CD8-positive, alpha-beta T cell (primary cell): ENCODE measurements at regions of chr7 and their contacts with region 1.

Region 1: DNA sequence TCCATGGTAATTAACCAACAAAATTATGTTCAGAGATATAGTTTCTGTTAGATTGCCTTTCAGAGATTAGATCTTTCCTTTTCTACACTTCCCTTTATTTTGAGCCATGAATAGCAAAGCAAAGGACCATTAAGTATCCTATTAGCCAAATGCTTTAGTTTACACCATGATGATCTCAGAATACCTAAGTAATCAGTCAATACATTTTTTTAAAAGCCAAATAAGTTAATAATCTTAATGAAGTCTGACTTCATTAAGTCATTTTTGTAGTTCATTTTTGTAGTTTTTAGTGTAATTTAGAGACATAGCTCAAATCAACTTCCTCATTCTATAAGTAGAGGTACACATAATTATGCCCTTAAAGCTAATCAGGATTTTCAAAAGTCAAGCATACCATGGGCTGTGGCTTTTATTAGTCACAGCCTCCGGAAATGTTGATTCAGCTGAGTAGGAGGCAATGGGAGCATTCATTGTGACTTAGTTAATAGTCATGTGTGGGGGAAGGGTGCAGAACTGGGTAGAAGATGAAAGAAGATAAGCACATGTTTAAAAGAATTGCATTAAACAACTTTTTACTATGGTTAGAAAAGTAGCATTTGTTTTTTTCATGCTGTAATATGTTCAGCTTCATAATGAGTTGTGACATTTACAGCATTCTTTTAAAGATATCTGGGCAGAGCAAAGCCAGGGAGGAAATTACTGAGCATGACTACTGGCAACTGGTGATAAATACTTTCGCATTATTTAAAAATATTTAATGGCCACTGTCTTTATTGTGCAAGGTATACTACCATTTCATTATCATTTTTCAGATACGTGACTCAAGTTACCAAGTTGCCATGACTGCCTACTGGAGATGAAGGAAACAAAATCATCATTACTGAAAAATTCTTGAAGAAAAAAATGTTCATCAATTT is 57.3 kb upstream of the CCDC71L start:
- DNase-seq: peak in 7 of 9 experiments; percentile 18 to 66 (median 51)
- ATAC-seq: peak; percentile 95
- H3K4me3 ChIP-seq: no peak overlapping the region
- H3K4me3 Mint-ChIP-seq: no peak overlapping the region
- H3K27ac ChIP-seq: no peak overlapping the region
- H3K27ac Mint-ChIP-seq: no peak overlapping the region
- H3K4me1 ChIP-seq: peaks cover 5% of the 10 kb centered on the region
- H3K4me1 Mint-ChIP-seq: no peaks in the 10 kb centered on the region
- H3K27me3 ChIP-seq: no peaks in the 10 kb centered on the region
- H3K27me3 Mint-ChIP-seq: no peaks in the 10 kb centered on the region
- CTCF ChIP-seq: no peak

Region 2: DNA sequence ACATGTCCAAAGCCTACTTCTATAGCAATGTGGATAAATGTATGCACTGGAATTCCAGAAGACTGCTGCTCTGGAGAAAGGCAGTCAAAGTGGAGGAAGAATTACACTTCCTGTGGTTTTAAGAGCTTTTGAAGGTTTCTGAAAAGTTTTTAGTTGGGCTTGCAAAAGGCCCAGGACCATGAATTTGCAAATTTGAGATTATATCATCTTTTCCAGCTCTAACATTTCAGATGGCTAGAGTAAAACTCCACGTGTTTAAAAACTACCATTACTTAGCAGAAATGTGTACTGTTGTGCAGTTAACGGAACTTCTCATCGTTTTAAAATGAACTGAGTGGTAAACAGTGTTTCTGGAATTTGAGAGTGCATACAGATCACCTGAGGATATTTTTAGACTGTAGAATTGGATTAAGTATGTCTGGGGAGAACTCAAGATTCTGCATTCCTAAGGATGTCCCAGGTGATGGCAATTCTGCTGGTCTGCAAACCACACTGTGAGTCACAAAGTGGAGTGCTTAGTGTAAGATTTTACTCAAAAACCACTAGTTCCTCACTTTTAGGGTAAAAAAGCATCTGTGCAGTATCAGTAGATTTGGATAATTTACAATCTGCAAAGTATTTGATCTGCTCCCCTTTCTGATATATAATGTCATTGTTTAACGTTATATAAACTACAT is 24.4 kb before region 1 on chr7:
- CTCF ChIA-PET with region 1: no interaction called
- POLR2A ChIA-PET with region 1: no interaction called
- intact Hi-C with region 1: loop called in 1 of 2 experiments (anchors 1 kb)
- DNase-seq: no peak
- ATAC-seq: no peak
- H3K4me3 ChIP-seq: no peak overlapping the region
- H3K4me3 Mint-ChIP-seq: no peak overlapping the region
- H3K27ac ChIP-seq: no peak overlapping the region
- H3K27ac Mint-ChIP-seq: no peak overlapping the region
- H3K4me1 ChIP-seq: no peaks in the 10 kb centered on the region
- H3K4me1 Mint-ChIP-seq: peaks cover 7% of the 10 kb centered on the region
- H3K27me3 ChIP-seq: no peaks in the 10 kb centered on the region
- H3K27me3 Mint-ChIP-seq: peaks cover 2% of the 10 kb centered on the region
- CTCF ChIP-seq: no peak

Region 3: DNA sequence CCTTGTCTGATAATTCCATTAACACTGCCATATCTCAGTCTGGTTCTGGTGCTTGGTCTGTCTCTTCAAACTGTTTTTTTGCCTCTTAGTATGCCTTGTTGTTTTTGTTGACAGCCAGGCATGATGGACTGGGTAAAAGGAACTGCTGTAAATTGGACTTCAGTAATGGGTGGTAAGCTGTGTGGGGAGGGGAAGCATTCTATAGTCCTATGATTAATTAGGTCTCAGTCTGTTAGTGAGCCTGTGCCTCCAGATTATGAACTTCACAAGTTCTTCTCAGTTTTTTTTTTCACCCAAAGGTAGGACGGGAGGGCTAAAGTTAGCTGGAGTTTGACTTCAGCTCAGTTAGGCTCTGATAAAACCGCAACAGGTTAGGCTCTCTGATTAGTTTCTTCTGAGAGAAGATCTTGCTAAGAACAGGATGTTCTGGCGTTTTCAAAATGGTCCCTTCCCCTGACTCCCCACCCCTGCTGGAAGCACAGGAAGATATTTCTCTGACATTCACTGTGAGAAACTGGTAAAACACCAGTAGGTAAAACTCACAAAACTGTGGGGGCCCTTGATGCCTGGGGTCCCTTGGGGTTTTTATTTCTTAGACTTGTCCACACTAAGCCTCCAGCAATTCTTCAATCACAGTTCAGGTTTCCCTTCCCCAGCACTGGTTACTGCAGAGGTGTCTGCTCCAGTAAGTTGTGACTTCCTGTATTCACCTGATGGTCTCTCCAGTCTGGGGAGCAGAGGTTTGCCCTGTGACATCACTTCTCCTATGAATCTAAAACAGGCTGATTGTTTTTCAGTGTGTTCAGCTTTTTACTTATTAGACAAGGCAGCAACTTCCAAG is 14.0 kb before region 1 on chr7:
- CTCF ChIA-PET with region 1: no interaction called
- POLR2A ChIA-PET with region 1: no interaction called
- intact Hi-C with region 1: no loop called
- DNase-seq: peak in 5 of 9 experiments; percentile 1 to 50 (median 10)
- ATAC-seq: peak; percentile 71
- H3K4me3 ChIP-seq: no peak overlapping the region
- H3K4me3 Mint-ChIP-seq: peak overlapping the region; percentile 32
- H3K27ac ChIP-seq: no peak overlapping the region
- H3K27ac Mint-ChIP-seq: peak overlapping the region; percentile 53
- H3K4me1 ChIP-seq: peaks cover 9% of the 10 kb centered on the region
- H3K4me1 Mint-ChIP-seq: peaks cover 12% of the 10 kb centered on the region
- H3K27me3 ChIP-seq: no peaks in the 10 kb centered on the region
- H3K27me3 Mint-ChIP-seq: peaks cover 11% of the 10 kb centered on the region
- CTCF ChIP-seq: no peak